Activated CD8-positive, alpha-beta T cell treated with anti-CD3 and anti-CD28 coated beads, Interleukin-2, amount 10 ng/mL, durations not matched to agents 7 days and 5 days (primary cell): ENCODE measurements at regions of chr14 and their contacts with region 1.

Region 1: DNA sequence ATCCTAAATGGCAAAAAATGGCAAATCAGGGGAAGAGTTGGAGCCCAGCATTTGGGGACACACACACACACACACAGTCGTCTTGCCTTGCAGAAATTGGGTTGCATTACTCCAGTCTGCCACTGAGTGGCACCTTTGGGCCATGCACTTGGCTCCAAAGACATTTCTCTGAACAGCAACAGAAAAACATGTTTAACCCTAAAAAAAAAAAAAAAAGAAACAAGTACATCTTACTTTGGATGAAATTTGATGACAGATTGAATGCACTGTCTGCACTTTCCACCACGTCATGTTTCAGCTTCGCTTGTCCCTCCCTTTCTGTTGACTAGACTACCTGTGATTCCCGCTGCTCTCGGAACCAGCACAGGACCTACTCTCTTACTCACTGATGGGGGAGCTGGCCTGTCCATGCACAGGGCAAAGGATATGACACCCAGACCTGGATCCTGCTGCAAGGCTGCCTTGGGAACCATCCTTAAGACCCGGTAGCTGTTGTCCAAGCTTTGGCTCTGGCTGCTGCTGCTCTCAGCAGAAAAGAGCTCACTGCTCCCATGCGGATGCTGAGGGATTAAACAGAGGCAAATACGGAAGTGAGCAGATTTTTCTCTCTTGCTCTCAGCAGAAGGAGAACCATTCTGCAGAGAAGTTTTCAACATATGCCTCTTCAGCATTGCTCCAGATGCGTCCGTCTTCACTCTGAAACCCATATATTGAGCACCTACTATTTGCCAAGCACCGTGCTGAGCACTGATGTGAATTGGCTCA is 376.8 kb downstream of the DPF3 start:
- DNase-seq: peak; percentile 88
- ATAC-seq: peak; percentile 27
- H3K4me3 Mint-ChIP-seq: peak overlapping the region; percentile 26
- H3K27ac Mint-ChIP-seq: peak overlapping the region; percentile 93
- H3K4me1 Mint-ChIP-seq: peaks cover 93% of the 10 kb centered on the region
- H3K27me3 Mint-ChIP-seq: peaks cover 4% of the 10 kb centered on the region

Region 2: DNA sequence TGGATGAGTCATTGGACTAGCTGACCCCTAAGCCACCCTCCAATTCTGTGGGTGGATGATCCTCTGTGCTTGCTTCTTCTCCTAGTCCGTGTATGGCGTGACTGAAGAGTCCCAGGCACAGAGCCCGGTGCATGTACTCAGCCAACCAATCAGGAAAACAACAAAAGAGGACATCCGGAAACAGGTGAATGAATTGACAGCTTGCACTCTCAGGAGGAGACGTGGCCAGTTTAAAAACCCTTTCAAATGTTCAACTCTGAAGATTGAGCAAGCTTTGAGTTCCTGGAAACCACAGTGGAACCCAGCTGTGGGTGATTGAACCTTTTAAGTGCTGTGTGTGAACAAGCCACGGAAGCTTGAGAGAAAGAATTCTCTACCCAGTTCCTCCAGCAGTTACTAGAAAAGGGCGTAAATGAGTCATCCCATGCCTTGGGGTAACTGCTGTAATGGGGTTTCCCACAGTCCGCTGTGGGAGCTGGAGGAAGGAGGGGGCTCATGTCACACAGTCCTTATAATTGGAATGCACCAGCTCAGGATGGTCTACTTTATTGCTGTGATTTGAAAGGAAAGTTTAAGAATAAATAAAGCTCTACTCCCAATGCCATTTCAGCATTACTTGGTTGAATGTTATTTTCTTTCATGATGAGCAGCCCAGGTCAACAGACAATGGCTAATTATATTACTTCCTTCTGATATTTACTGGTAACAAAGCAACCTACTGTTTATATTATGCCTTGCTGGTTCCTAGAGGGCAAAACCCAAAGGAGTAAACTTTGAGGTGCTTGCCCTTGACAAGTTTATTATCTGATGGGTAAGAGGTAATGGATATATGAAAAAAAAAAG is 40.2 kb before region 1 on chr14:
- CTCF ChIA-PET with region 1: interaction called, 67 read pairs
- POLR2A ChIA-PET with region 1: no interaction called
- DNase-seq: peak; percentile 95
- ATAC-seq: peak; percentile 91
- H3K4me3 Mint-ChIP-seq: peak overlapping the region; percentile 56
- H3K27ac Mint-ChIP-seq: peak overlapping the region; percentile 92
- H3K4me1 Mint-ChIP-seq: peaks cover 93% of the 10 kb centered on the region
- H3K27me3 Mint-ChIP-seq: no peaks in the 10 kb centered on the region

Region 3: DNA sequence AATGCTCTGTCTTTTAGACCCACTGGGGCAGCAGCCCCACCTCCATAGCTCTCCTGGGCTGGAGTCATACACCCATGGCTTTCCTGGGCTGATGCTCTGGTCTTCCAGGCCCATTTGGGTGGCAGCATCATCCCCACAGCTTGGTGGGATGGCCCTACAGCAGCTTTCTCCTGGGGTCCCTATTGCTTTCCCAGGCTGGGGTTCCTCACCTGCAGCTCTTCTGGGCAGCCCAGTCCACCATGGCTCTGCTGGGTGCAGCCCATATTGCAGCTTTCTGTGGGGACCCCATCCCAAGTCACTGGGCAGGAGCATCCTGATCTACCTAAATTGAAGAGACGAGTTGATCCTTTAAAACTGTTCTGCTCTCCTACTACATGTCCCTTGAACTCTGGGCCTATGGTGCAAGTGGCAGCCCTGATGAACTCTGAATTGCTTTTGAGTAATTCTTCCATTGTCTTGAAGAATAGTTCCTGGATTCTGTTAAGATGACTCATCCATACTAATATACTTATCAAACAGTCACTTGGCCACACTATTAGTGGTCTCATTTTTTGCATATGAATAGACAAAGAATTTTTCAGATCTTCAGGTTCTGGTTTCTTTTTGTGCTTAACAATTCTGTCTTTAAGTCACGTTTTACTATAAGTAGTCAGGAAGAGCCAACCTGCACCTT is 13.3 kb before region 1 on chr14:
- CTCF ChIA-PET with region 1: interaction called, 22 read pairs
- POLR2A ChIA-PET with region 1: no interaction called
- DNase-seq: no peak
- ATAC-seq: no peak
- H3K4me3 Mint-ChIP-seq: no peak overlapping the region
- H3K27ac Mint-ChIP-seq: no peak overlapping the region
- H3K4me1 Mint-ChIP-seq: no peaks in the 10 kb centered on the region
- H3K27me3 Mint-ChIP-seq: peaks cover 24% of the 10 kb centered on the region

Region 4: GRCh38 chr14:72716476-72716875 is 199.4 kb after region 1 on chr14:
- CTCF ChIA-PET with region 1: interaction called, 13 read pairs
- POLR2A ChIA-PET with region 1: interaction called, 3 read pairs
- DNase-seq: no peak
- ATAC-seq: no peak
- H3K4me3 Mint-ChIP-seq: no peak overlapping the region
- H3K27ac Mint-ChIP-seq: no peak overlapping the region
- H3K4me1 Mint-ChIP-seq: peaks cover 52% of the 10 kb centered on the region
- H3K27me3 Mint-ChIP-seq: peaks cover 3% of the 10 kb centered on the region

Region 5: DNA sequence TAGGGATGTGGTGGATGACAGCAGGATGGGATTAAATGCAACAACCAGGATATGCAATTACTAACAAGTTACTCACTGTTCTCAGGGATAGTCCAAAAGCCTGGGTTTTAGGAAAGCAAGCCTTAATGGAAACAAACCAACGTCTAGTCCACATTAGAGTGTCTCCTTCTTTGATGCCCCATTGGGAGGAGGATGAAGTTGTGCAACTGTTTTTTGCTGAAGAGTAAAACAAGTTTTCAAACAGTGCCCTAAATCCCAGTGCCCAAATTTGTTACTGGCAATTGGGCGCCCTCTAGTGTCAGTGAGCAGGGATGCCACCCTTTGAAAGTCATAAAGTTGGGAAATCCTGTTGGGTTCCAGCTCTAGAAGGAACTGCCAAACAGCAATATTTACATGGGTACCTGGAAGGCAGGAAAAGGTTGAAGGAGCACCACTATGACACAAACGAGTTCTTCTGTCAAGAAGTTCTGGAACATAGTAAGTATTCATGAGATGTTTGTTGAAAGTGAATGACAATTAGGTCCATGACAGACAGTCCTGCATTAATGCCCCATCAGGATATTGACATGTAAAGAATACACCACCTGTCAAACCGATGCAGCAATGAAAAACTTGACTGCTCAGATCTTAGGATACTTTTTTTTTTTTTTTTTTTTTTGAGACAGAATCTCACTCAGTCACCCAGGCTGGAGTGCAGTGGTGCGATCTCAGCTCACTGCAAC is 387.9 kb after region 1 on chr14:
- CTCF ChIA-PET with region 1: interaction called, 209 read pairs
- POLR2A ChIA-PET with region 1: no interaction called
- DNase-seq: peak; percentile 79
- ATAC-seq: peak; percentile 76
- H3K4me3 Mint-ChIP-seq: no peak overlapping the region
- H3K27ac Mint-ChIP-seq: no peak overlapping the region
- H3K4me1 Mint-ChIP-seq: peaks cover 17% of the 10 kb centered on the region
- H3K27me3 Mint-ChIP-seq: peaks cover 42% of the 10 kb centered on the region

Region 6: GRCh38 chr14:72948481-72949138 is 431.5 kb after region 1 on chr14:
- CTCF ChIA-PET with region 1: interaction called, 113 read pairs
- POLR2A ChIA-PET with region 1: no interaction called
- DNase-seq: peak; percentile 78
- ATAC-seq: peak; percentile 42
- H3K4me3 Mint-ChIP-seq: no peak overlapping the region
- H3K27ac Mint-ChIP-seq: peak overlapping the region; percentile 13
- H3K4me1 Mint-ChIP-seq: peaks cover 21% of the 10 kb centered on the region
- H3K27me3 Mint-ChIP-seq: no peaks in the 10 kb centered on the region